Aorta (tissue), 5 donors: ENCODE measurements at regions of chr20 and their contacts with region 1.

Region 1: GRCh38 chr20:44187051-44187762 is at the start of gene JPH2:
- DNase-seq: peak; percentile 84 to 91
- ATAC-seq: peak; percentile 87
- H3K4me3 ChIP-seq: peak within 1 kb of the TSS; percentile 68 to 81
- H3K27ac ChIP-seq: peak within 1 kb of the TSS; percentile 63 to 96
- H3K4me1 ChIP-seq: peaks cover 0 to 4% of the 10 kb centered on the region in 2 donors
- H3K27me3 ChIP-seq: no peaks in the 10 kb centered on the region
- total RNA-seq, gene JPH2: 63.3 to 140 TPM

Region 2: GRCh38 chr20:44115762-44116644 is 71.2 kb before region 1 on chr20:
- intact Hi-C with region 1: loop called (anchors 1 kb)
- DNase-seq: no peak
- ATAC-seq: no peak
- H3K4me3 ChIP-seq: no peak overlapping the region
- H3K27ac ChIP-seq: no peak overlapping the region
- H3K4me1 ChIP-seq: peaks cover 0 to under 1% of the 10 kb centered on the region in 2 donors
- H3K27me3 ChIP-seq: no peaks in the 10 kb centered on the region

Region 3: DNA sequence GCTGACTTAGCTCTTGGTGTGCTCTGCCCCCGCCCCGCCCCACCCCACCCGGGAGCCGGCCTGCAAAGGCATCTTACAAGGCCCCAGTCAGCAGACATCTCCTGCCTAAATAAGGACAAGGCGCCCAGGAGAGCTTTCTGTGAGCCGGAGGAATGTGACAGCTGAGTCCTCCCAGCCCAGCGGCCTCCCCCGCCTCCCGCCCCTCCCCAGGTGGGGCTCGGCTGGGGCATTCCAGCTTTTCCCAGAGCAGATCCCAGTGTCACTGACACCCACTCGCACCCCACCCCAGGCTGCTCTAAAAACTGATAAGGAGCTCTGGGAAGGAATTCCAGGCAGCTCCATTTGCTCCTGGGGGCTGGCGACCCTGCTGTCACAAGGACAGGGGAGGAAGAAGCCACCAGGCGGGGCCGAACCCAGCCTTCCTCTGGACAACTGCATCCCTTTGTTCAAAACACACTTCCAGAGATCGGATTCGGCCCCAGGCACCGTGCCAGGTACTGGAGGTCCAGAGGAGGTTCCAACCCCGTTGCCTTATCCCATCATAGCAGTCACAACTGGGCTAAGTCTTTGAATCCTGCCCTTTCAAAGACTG is 49.9 kb before region 1 on chr20:
- intact Hi-C with region 1: loop called in 1 of 2 experiments (anchors 5 kb)
- DNase-seq: peak; percentile 66 to 86
- ATAC-seq: peak; percentile 65
- H3K4me3 ChIP-seq: no peak overlapping the region
- H3K27ac ChIP-seq: peak overlapping the region; percentile 84 to 97
- H3K4me1 ChIP-seq: peaks cover 3% of the 10 kb centered on the region in 2 donors
- H3K27me3 ChIP-seq: no peaks in the 10 kb centered on the region

Region 4: GRCh38 chr20:44145131-44145775 is 42.0 kb before region 1 on chr20:
- intact Hi-C with region 1: loop called (anchors 2 to 5 kb)
- DNase-seq: no peak
- ATAC-seq: no peak
- H3K4me3 ChIP-seq: no peak overlapping the region
- H3K27ac ChIP-seq: peak overlapping the region; percentile 71 to 83
- H3K4me1 ChIP-seq: peaks cover 3 to 10% of the 10 kb centered on the region in 2 donors
- H3K27me3 ChIP-seq: no peaks in the 10 kb centered on the region

Region 5: GRCh38 chr20:44153636-44154043 is 33.6 kb before region 1 on chr20:
- intact Hi-C with region 1: loop called in 1 of 2 experiments (anchors 5 kb)
- DNase-seq: peak in 1 of 2 donors; percentile 65
- ATAC-seq: peak; percentile 71
- H3K4me3 ChIP-seq: no peak overlapping the region
- H3K27ac ChIP-seq: peak overlapping the region; percentile 95 to 96
- H3K4me1 ChIP-seq: peaks cover 3% of the 10 kb centered on the region in 2 donors
- H3K27me3 ChIP-seq: no peaks in the 10 kb centered on the region

Region 6: DNA sequence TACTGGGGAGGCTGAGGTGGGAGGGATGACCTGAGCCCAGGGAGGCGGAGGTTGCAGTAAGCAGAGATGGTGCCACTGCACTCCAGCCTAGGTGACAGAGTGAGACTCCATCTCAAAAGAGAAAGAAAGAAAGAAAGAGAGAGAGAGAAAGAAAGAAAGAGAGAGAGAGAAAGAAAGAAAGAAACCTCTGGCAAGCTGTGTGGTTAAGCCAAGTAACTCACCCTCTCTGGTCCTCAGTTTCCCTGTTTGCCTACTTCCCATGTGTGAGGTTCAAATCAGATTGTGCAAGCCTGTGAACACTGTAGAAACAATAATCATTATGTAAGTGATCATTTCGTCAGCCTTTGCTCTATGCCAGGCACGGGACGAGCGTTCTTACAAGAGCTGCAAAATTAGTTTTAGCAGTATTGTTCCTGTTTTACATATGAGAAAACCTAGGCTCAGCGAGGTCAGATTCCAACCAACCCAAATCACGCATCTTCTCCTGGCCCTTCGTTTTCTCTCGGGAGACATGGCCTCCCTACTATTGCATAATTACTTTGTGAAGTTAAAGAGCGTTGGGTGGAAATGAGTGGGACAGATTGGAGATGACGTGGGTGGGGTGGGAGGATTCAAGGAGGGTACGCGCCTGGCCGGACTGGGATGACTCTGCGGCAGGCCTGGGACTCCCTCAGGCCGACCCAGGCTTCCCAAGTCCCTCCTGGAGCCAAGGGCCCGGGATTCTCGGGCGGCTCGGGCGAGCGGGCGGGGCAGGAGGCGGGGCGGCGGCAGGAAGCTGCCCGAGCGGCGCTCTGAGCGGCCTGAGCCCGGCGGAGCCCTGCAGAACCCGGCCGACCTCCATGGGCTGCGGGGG is 1646.0 kb after region 1 on chr20 and contains the start of gene SNX21:
- intact Hi-C with region 1: loop called in 1 of 2 experiments (anchors 10 kb)
- DNase-seq: peak; percentile 91 to 94
- ATAC-seq: peak; percentile 92
- H3K4me3 ChIP-seq: peak within 1 kb of the TSS; percentile 62 to 75
- H3K27ac ChIP-seq: peak within 1 kb of the TSS; percentile 71 to 92
- H3K4me1 ChIP-seq: peaks cover 0 to 1% of the 10 kb centered on the region in 2 donors
- H3K27me3 ChIP-seq: no peaks in the 10 kb centered on the region
- total RNA-seq, gene SNX21: 36.2 to 57.7 TPM